GM10248 (cell line): ENCODE measurements at regions of chr12 and their contacts with region 1.

Region 1: DNA sequence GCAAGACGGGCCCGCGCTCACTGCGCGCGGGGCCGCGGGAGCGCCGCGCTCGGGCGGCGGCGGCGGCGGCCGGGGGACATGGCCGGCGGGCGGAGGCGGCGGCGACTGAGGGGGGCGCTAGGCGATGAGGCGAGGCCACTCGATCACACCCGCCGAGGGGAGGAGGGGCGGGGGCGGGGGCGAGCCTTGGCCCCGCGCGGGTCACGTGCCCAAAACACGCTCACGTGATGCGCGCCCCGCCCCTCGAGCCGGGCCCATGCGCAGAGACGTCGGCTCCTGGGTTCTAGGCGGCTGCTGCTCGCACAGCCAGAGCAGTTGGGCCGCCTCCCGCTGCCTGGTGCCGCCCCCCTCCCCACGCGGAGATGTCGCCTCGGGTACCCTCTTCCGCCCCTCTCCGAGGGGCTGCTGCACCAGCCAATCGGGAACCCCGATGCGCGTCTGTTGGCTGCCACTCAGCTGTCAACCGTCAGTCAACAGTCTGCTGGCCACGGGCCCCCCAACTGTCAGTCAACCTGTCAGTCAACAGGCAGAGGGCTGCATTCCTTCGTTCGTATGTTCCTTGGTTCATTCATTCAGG is at the start of gene SPPL3:
- DNase-seq: peak; percentile 96
- CTCF ChIP-seq: peak; percentile 44

Region 2: GRCh38 chr12:120892265-120892664 is 12.0 kb before region 1 on chr12:
- CTCF ChIA-PET with region 1: interaction called, 21 read pairs
- POLR2A ChIA-PET with region 1: interaction called, 4 read pairs
- DNase-seq: no peak
- CTCF ChIP-seq: no peak